H1 (cell line): ENCODE measurements at regions of chr14 and their contacts with region 1.

Region 1: DNA sequence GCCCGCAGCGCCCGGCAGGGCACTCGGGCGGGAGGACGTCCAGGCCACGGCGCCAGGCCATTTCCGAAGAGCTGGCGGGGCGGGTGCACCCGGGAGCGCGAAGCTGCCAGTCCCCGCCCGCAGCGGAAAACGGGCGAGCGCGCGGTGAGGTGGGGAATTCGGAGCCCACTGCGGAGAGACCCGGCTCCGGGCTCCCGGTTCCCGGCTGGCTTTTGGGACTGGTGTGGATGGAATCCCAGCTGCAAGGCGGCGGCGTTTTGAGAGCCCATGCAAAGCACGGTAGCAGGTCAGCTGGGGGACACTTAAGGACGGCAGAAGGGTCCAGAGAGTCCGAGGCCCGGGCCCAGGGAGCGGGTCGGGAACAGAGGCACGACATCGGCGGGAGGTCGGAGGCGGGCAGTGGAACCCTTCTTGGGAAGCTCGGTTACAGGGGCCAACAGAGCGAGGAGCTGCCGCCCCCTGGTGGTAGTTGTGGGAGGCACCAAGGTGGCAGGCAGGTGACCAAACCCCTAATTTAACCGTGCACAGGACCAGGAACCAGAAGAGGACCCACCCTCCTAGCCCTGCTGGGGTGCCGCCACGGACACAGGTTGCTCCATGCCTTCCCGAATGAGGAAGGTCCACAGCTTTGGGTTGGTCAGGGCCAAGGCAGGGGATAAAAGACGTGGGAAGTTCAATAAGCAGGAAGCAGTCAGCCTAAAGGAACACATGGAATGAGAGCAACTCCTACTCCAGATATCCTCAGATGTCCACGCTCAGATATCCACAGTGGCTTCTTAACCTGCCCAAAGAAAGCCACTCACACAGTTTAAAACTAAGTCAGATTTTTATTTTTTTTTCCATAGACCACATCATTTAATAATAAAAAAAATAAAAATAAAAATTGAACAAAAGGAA is 685 bp upstream of the CDH24 start:
- DNase-seq: peak; percentile 86 to 98
- H3K4me3 ChIP-seq: peak overlapping the region; percentile 34 to 82 (median 65)
- H3K27ac ChIP-seq: peak overlapping the region; percentile 64; the same call in 1 of the 2 replicates
- H3K4me1 ChIP-seq: peaks cover 0 to 15% (median 4%) of the 10 kb centered on the region in 4 experiments; a peak in 4 of 7 replicates
- H3K27me3 ChIP-seq: no peaks in the 10 kb centered on the region; a peak in 1 of 7 replicates
- CTCF ChIP-seq: peak; percentile 87 to 96 (median 95)
- EP300 ChIP-seq: no peak
- POLR2A ChIP-seq: peak in 1 of 2 experiments; percentile 61; a peak in 2 of 3 replicates
- RAD21 ChIP-seq: peak; percentile 79 to 80

Region 2: GRCh38 chr14:22966783-22967269 is 91.2 kb before region 1 on chr14:
- CTCF ChIA-PET with region 1: interaction called, 11 read pairs
- POLR2A ChIA-PET with region 1: interaction called, 10 read pairs
- DNase-seq: no peak
- H3K4me3 ChIP-seq: no peak overlapping the region
- H3K27ac ChIP-seq: no peak overlapping the region
- H3K4me1 ChIP-seq: no peaks in the 10 kb centered on the region
- H3K27me3 ChIP-seq: no peaks in the 10 kb centered on the region
- CTCF ChIP-seq: no peak
- EP300 ChIP-seq: no peak
- POLR2A ChIP-seq: no peak; a peak in 1 of 3 replicates
- RAD21 ChIP-seq: no peak

Region 3: GRCh38 chr14:22986508-22987054 is 71.4 kb before region 1 on chr14:
- CTCF ChIA-PET with region 1: interaction called, 785 read pairs
- POLR2A ChIA-PET with region 1: interaction called, 65 read pairs
- DNase-seq: peak in 1 of 2 experiments; percentile 95
- H3K4me3 ChIP-seq: no peak overlapping the region
- H3K27ac ChIP-seq: no peak overlapping the region
- H3K4me1 ChIP-seq: no peaks in the 10 kb centered on the region
- H3K27me3 ChIP-seq: peaks cover 0 to 2% (median under 1%) of the 10 kb centered on the region in 4 experiments; a peak in 1 of 7 replicates
- CTCF ChIP-seq: peak; percentile 74 to 96 (median 90)
- EP300 ChIP-seq: no peak
- POLR2A ChIP-seq: no peak
- RAD21 ChIP-seq: peak; percentile 94 to 96

Region 4: GRCh38 chr14:23006544-23007419 is 51.2 kb before region 1 on chr14:
- CTCF ChIA-PET with region 1: interaction called, 785 read pairs
- POLR2A ChIA-PET with region 1: interaction called, 23 read pairs
- DNase-seq: peak; percentile 89 to 92
- H3K4me3 ChIP-seq: peak overlapping the region; percentile 73 to 85 (median 76)
- H3K27ac ChIP-seq: peak overlapping the region; percentile 89
- H3K4me1 ChIP-seq: peaks cover 4 to 7% (median 6%) of the 10 kb centered on the region in 4 experiments; a peak in 4 of 7 replicates
- H3K27me3 ChIP-seq: no peaks in the 10 kb centered on the region
- CTCF ChIP-seq: peak in 1 of 3 experiments; percentile 27; a peak in 2 of 4 replicates
- EP300 ChIP-seq: no peak
- POLR2A ChIP-seq: peak; percentile 74 to 99
- RAD21 ChIP-seq: no peak

Region 5: DNA sequence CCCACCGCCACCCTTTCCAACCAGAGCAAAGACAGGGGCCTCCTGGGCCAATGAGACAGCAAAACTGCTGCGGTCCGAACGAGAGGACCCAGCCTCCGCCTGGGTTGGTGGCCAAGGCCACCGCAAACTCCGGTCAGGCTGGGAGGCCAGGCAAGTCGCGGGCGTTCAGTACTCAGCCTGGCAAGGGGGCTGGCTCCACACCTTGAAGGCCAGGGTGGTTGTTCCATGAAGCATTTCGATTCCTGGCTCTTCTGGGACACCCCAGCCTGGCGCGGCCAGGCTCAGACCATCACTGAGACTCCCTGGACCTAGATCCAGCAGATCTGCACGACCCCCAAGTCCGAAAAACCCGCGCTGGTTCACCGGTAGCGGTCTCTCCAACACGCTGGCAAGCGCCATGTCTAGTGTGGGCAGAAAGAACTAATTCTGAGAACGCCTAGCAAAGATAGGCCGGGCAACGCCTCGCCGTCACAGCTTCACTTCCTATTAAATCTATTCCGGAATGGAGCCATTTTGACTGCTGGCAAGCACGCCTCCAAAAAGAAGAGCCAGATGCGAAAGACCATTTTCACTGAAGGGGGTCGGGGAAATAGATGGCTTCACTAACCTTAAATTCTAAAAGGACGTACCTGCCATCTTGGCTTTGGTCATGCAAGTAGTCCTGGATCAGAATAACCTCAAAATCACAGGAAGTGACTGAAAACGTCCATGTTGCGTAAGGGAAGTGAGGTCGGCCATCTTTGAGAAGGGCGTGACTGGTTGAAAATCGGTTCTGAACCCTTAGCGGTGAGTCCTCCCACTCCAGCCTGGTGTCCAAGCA is 23.3 kb before region 1 on chr14 and contains the start of gene PSMB5:
- CTCF ChIA-PET with region 1: interaction called, 7 read pairs
- POLR2A ChIA-PET with region 1: interaction called, 10 read pairs
- DNase-seq: peak; percentile 80 to 89
- H3K4me3 ChIP-seq: peak within 1 kb of the TSS; percentile 79 to 95 (median 88)
- H3K27ac ChIP-seq: peak within 1 kb of the TSS; percentile 98
- H3K4me1 ChIP-seq: peaks cover 0 to 3% (median 1%) of the 10 kb centered on the region in 4 experiments; a peak in 2 of 7 replicates
- H3K27me3 ChIP-seq: no peaks in the 10 kb centered on the region
- CTCF ChIP-seq: no peak
- EP300 ChIP-seq: no peak
- POLR2A ChIP-seq: peak; percentile 75 to 89
- RAD21 ChIP-seq: no peak
- total RNA-seq, gene PSMB5: 246 and 254 TPM in 2 replicates

Region 6: DNA sequence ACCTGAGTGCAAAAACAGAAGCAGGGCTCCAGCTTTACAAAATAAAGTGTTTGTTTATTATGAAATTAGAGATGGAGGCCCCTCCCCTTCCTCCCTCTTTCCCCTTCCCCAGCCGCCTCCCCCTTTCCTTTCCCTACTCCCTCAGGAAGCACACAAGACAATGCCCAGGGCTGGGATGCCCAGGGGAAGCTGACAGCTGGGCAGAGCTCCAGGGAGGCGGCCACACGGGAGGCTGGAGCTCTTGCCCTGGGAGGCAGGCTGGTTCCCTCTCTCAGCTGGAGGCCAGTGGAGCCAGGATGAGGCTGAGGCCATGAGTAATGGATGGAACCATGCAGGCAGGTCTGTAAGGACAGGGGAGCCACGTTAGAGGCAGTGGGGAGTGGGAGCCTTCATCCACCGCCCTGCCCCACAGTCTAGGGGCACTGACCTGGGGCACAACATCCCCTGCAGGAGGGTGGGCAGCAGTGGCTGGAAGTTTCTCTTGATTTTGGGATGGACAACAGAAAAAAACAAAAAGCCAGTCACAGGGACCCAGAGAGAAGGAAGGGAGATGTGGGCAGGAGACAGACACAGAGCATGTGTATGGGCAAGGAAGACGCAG is 10.9 kb before region 1 on chr14:
- CTCF ChIA-PET with region 1: interaction called, 26 read pairs
- POLR2A ChIA-PET with region 1: interaction called, 13 read pairs
- DNase-seq: no peak
- H3K4me3 ChIP-seq: no peak overlapping the region
- H3K27ac ChIP-seq: no peak overlapping the region
- H3K4me1 ChIP-seq: peaks cover 0 to 7% (median 0%) of the 10 kb centered on the region in 4 experiments; a peak in 1 of 7 replicates
- H3K27me3 ChIP-seq: no peaks in the 10 kb centered on the region
- CTCF ChIP-seq: no peak
- EP300 ChIP-seq: no peak
- POLR2A ChIP-seq: no peak
- RAD21 ChIP-seq: no peak

Region 7: GRCh38 chr14:23076785-23077408 is 18.9 kb after region 1 on chr14:
- CTCF ChIA-PET with region 1: interaction called, 28 read pairs
- POLR2A ChIA-PET with region 1: interaction called, 37 read pairs
- DNase-seq: no peak
- H3K4me3 ChIP-seq: no peak overlapping the region
- H3K27ac ChIP-seq: no peak overlapping the region
- H3K4me1 ChIP-seq: peaks cover under 1 to 10% (median 5%) of the 10 kb centered on the region in 4 experiments; a peak in 6 of 7 replicates
- H3K27me3 ChIP-seq: no peaks in the 10 kb centered on the region
- CTCF ChIP-seq: peak in 2 of 3 experiments; percentile 51 to 61; a peak in 3 of 4 replicates
- EP300 ChIP-seq: no peak
- POLR2A ChIP-seq: no peak
- RAD21 ChIP-seq: peak; percentile 41 to 53